ENCODE measurements at regions of chr9 and their contacts with region 1.

Region 1: DNA sequence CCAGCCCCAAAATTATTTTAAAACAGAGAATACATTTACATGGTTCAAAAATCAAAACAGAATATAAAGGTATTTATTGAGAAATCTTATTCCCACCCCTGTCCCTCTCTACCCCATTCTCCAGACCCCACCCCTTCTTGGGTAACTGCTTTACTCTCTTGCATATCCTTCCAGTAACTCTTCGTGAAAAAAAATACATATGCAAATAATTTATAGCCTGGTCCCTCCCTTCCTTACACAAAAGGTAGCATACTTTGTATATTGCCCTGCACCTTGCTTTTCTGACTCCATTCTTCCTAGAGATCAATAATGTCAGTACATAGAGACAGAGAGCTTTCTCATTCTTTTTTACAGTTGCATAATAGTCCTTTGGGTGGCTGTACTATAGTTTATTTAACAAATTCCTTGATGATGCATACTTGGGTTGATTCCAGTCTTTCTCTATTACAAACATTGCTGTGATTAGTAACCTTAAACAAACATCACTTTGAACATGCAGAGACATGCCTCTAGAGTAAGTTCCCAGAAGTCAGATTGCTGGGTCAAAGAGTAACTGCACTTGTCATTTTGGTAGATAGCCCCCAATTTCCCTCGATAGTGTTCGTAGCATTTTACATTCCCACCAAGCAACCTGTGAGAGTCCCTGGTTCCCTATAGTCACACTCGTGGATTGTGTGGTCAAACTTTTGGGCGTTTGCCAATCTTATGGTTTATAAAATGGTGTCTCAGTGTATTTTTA is 47.8 kb downstream of the STOM start:
- DNase-seq: no peak
- H3K4me3 ChIP-seq: no peak overlapping the region
- H3K27ac ChIP-seq: peak overlapping the region; percentile 72 to 87 (median 84)
- H3K4me1 ChIP-seq: peaks cover 14 to 48% (median 21%) of the 10 kb centered on the region in 4 donors
- H3K27me3 ChIP-seq: no peaks in the 10 kb centered on the region
- CTCF ChIP-seq: no peak
- EP300 ChIP-seq: peak; percentile 53
- POLR2A ChIP-seq: no peak

Region 2: DNA sequence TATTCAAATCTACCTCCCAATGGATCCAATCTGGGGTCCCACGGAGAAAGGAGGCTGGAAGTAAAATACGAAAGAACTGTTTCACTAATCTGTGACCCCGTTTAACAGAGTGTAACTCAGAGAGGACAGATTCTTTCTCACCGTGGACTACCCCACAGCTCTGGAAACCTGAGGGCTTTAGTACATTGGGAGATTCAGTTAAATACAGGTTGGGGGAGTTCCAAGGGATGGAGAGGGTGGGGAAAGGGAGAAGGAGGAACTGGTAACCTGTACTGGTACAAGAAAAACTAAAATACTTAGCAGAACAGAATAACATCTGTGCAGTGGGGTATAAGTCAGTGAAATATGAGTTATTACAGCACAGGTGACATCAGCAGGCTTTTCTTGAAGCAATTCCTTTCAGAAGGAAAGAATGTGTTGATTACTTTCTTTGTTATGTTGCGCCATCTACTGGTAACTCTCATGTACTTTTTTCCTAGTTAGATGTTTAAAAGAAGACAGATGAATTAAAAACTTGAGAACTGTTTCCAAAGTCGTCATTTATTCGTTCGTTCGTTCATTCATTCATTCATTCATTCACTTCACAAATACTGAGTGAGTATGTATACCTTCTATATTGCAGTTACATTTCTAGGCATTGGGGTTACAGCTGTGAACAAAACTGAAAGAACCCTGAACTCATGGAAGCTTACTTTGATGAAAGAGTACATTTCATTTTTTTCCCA is 77.8 kb after region 1 on chr9:
- in situ Hi-C with region 1: loop called in 3 of 4 experiments (anchors 5 kb)
- intact Hi-C with region 1: loop called (anchors 5 kb)
- DNase-seq: no peak
- H3K4me3 ChIP-seq: no peak overlapping the region
- H3K27ac ChIP-seq: no peak overlapping the region
- H3K4me1 ChIP-seq: no peaks in the 10 kb centered on the region
- H3K27me3 ChIP-seq: no peaks in the 10 kb centered on the region
- CTCF ChIP-seq: peak; percentile 72 to 82 (median 76)
- EP300 ChIP-seq: no peak
- POLR2A ChIP-seq: no peak

Region 3: GRCh38 chr9:121510766-121511550 is 188.8 kb after region 1 on chr9:
- in situ Hi-C with region 1: no loop called
- intact Hi-C with region 1: no loop called
- DNase-seq: no peak
- H3K4me3 ChIP-seq: no peak overlapping the region
- H3K27ac ChIP-seq: peak overlapping the region in 1 of 4 donors; percentile 2
- H3K4me1 ChIP-seq: no peaks in the 10 kb centered on the region
- H3K27me3 ChIP-seq: no peaks in the 10 kb centered on the region
- CTCF ChIP-seq: no peak
- EP300 ChIP-seq: no peak
- POLR2A ChIP-seq: no peak

Measured in transverse colon (tissue), 4 donors.